Posterior vena cava (tissue), 2 donors: ENCODE measurements at regions of chr12 and their contacts with region 1.

Region 1: GRCh38 chr12:87116780-87117179 is 860.6 kb upstream of the MGAT4C start:
- DNase-seq: no peak

Region 2: DNA sequence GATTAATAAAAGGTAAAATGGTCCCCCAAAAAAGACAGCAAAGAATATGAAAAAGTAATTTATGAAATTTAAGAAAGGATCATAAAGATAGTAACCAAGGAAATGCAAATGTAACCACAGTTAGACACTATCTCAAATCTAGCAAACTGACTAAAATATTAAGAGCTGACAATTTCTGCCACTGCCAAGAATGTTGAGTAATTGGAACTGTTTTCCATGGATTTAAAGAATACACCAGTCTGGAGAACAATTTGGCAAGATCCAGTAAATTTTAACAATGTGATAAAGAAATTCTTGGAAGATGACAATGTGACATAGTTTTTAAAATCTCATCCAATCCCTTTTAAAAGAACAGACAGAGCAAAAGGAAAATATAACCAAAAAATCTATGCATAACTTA is 62.6 kb before region 1 on chr12:
- intact Hi-C with region 1: no loop called
- DNase-seq: no peak

Region 3: DNA sequence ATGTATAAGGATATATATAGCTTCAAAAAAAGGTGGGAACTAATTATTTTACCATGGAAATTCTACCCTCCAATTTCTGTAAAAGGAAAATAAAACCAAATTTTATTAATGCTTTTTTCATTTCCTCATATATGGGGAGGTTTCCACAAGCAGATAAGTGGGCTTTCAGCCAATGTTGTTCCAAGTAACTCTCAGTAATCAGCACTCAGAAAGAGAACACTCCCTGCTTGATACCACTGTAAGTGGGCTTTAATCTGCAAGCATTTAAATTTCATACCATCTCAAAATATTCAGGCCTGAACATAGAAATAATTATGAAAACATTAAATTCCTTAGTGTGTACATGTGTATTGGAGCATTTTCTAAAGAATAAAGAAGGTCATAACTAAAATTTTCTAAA is 84.8 kb after region 1 on chr12:
- intact Hi-C with region 1: loop called in 1 of 2 experiments (anchors 10 kb)
- DNase-seq: no peak